Naive thymus-derived CD8-positive, alpha-beta T cell (primary cell): ENCODE measurements at regions of chr2 and their contacts with region 1.

Region 1: GRCh38 chr2:98731041-98731893 is at the start of gene MGAT4A:
- DNase-seq: peak; percentile 72 to 88 (median 82)
- ATAC-seq: peak; percentile 76 to 77
- H3K4me3 Mint-ChIP-seq: peak within 1 kb of the TSS; percentile 73 to 98 (median 92)
- H3K27ac Mint-ChIP-seq: peak within 1 kb of the TSS; percentile 94 to 99 (median 97)
- H3K4me1 Mint-ChIP-seq: peaks cover 22 to 62% (median 58%) of the 10 kb centered on the region in 4 donors
- H3K27me3 Mint-ChIP-seq: no peaks in the 10 kb centered on the region
- polyA plus RNA-seq, gene MGAT4A: 285 to 350 (median 310) TPM

Region 2: DNA sequence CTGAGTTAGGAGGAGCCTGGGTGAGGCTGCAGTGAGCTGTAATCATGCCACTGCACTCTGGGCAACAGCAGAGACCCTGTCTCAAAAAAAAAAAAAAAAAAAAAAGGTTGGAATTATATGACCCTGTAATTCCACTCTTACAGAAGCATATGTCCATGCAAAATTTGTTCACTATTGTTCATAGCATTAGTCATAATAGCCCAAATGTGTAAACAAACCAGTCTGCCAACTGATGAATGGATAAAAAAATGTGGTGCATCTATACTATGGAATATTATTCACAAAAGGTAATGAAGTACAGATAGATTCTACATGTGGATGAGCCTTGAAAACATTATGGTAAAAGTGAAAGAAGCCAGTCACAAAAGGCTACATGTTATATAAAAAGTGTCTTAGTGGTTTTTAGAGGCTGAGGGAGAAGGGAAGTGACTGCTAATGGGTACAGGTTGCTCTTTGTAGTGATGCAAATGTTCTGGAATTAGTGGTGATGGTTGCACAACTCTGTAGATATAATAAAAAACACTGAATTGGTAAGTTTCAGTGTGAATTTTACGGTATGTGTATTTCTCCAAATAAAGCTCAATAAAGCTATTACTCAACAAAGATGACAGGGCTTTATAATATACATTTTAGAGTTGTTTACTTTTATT is 132.4 kb before region 1 on chr2:
- POLR2A ChIA-PET with region 1: no interaction called
- DNase-seq: no peak
- ATAC-seq: peak in 1 of 2 donors; percentile 43
- H3K4me3 Mint-ChIP-seq: no peak overlapping the region
- H3K27ac Mint-ChIP-seq: peak overlapping the region in 9 of 10 donors; percentile 12 to 78 (median 47)
- H3K4me1 Mint-ChIP-seq: peaks cover 6 to 17% (median 12%) of the 10 kb centered on the region in 4 donors
- H3K27me3 Mint-ChIP-seq: no peaks in the 10 kb centered on the region

Region 3: GRCh38 chr2:98664327-98664726 is 66.9 kb before region 1 on chr2:
- POLR2A ChIA-PET with region 1: interaction called, 248 read pairs
- DNase-seq: peak in 9 of 10 donors; percentile 28 to 86 (median 71)
- ATAC-seq: peak; percentile 67 to 72
- H3K4me3 Mint-ChIP-seq: peak overlapping the region; percentile 64 to 93 (median 85)
- H3K27ac Mint-ChIP-seq: peak overlapping the region; percentile 91 to 98 (median 96)
- H3K4me1 Mint-ChIP-seq: peaks cover 38 to 82% (median 70%) of the 10 kb centered on the region in 4 donors
- H3K27me3 Mint-ChIP-seq: no peaks in the 10 kb centered on the region

Region 4: DNA sequence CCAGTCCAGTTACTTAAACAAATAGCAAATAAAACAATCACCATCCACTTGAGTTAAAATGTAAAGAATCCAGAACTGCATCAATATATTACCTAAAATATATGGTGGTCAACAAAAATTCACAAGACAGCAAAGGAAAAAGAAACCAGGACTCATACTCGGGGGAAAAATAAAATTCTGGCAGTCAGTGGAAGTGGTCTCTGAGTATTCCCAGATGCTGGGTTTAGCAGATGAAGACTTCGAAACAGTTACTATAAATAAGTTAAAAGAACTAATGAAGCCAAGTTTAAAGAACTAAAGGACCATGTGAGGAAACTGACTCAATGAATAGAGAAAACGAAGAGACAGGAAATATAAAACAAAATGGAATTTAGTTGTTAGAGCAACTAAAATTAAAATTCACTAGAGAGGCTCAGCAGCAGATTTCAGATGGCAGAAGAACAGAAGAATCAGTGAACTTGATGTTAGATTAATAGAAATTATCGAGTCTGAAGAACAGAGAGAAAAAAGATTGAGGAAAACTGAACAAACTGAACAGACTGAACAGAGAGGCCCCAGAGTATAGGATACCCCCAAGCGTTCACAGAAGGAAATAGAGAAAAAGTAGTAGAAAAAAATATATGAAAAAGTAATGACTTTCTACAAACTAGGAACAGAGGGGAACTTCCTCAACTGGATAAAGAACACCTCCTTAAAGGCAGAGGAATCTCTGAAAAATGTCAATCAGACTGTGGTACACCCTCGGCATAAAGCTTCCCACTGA is 28.2 kb before region 1 on chr2:
- POLR2A ChIA-PET with region 1: interaction called, 12 read pairs
- DNase-seq: no peak
- ATAC-seq: peak; percentile 35 to 62
- H3K4me3 Mint-ChIP-seq: peak overlapping the region; percentile 60 to 87 (median 68)
- H3K27ac Mint-ChIP-seq: peak overlapping the region; percentile 83 to 95 (median 90)
- H3K4me1 Mint-ChIP-seq: peaks cover 45 to 83% (median 80%) of the 10 kb centered on the region in 4 donors
- H3K27me3 Mint-ChIP-seq: no peaks in the 10 kb centered on the region

Region 5: GRCh38 chr2:98715812-98716451 is 15.3 kb before region 1 on chr2:
- POLR2A ChIA-PET with region 1: interaction called, 61 read pairs
- DNase-seq: peak in 2 of 10 donors; percentile 35 to 38
- ATAC-seq: peak; percentile 66 to 74
- H3K4me3 Mint-ChIP-seq: peak overlapping the region; percentile 52 to 80 (median 70)
- H3K27ac Mint-ChIP-seq: peak overlapping the region; percentile 85 to 97 (median 91)
- H3K4me1 Mint-ChIP-seq: peaks cover 47 to 90% (median 88%) of the 10 kb centered on the region in 4 donors
- H3K27me3 Mint-ChIP-seq: no peaks in the 10 kb centered on the region

Region 6: DNA sequence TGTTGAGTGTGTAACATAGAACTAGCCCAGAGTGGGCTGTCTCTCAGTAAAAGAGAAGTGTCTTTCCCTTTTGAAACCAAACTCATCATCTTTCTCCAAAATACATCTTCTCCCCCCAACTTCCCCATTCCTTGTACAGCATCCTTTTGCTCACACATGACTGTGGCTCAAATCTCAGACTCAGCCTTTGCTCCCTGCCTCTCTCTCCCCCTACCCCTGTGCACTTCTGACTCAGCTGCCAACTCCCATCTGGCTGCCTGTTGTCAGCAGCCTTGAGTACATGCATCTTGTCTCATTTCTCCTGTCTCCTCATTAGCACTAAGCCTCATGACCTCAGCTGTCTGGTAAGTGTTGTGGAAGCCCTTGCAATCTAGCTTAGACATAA is 17.8 kb after region 1 on chr2:
- POLR2A ChIA-PET with region 1: interaction called, 24 read pairs
- DNase-seq: no peak
- ATAC-seq: peak in 1 of 2 donors; percentile 25
- H3K4me3 Mint-ChIP-seq: peak overlapping the region in 3 of 10 donors; percentile 1 to 30 (median 2)
- H3K27ac Mint-ChIP-seq: peak overlapping the region in 8 of 10 donors; percentile 9 to 84 (median 63)
- H3K4me1 Mint-ChIP-seq: peaks cover 24 to 55% (median 53%) of the 10 kb centered on the region in 4 donors
- H3K27me3 Mint-ChIP-seq: no peaks in the 10 kb centered on the region

Region 7: DNA sequence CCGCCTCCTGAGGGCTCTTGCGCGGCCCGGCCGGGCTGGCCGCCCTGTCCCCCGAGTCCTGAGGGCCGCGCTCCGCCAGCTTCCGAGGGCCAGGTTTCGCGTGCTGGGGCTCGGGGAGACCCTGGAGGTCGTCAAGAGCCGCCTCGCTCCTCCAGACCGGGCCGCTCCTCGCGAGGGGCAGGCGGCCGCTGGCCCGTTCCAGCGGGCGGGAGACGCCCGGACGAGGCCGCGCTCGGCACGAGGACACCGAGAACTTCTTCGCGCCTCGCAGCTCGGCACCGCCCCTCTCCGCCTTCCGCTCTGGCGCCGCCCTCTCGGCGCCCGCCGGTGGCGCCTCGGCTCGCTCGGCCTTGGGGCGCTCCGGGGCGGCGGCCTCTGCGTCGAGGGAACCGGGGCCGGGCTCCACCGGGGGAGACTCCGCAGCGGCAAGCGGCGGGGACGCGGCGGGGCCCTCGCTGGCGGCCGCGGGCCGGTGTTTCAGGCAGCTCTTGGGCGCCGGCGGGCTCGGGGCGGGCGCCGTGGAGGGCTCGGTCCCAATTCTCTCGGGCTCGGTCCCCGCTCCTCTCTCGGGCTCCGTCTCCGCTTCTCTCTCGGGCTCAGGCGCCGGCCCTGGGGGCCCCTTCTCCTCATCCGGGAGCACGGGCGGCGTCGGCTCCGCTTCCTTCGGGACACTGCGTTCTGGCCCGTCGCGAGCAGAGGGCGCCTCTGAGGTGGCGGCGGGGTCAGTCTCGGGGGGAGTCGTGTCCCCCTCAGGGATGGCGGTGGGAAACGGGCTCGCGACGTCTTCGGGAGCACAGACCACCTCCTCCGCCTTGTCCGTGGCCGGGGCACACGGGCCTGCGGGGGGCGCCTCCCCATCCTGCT is 91.3 kb after region 1 on chr2:
- POLR2A ChIA-PET with region 1: interaction called, 12 read pairs
- DNase-seq: peak; percentile 40 to 75 (median 62)
- ATAC-seq: peak; percentile 90 to 94
- H3K4me3 Mint-ChIP-seq: peak overlapping the region in 9 of 10 donors; percentile 9 to 79 (median 36)
- H3K27ac Mint-ChIP-seq: peak overlapping the region in 3 of 10 donors; percentile 31 to 55 (median 43)
- H3K4me1 Mint-ChIP-seq: peaks cover 12 to 39% (median 24%) of the 10 kb centered on the region in 4 donors
- H3K27me3 Mint-ChIP-seq: peaks cover 0 to 5% (median 0%) of the 10 kb centered on the region in 5 donors

Region 8: DNA sequence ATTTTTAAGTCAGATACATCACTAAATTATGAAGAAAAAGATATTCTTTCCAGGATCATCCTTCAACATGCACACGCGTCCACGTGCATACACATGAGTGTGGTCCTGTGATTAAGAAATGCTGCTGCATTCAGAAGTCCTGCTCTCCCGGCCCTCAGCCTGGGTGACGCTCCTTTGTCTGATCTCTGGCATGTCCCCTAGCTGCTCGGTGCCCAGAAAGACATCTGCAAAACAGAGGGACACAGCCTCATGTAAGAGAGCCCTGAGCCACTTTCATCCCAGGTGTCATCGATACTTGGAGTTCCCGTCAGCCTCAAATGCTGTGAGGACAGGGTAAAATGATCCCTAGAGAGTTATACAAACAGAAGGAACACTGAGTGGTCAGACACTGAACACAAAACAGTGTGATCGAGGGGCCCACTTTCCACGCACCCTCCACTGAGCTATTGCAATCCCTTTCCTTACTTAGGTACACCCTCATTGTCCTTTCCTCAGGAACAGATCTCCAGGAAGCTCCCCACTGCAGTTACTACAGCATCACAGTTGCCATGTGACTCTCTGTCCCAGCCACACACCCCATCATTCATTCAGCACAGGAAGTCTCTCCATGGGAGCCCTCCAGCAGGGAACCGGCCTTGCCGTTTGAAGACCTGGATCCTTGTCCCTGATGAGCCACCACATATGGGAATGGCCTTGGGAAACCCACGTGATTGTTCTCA is 172.7 kb after region 1 on chr2:
- POLR2A ChIA-PET with region 1: no interaction called
- DNase-seq: no peak
- ATAC-seq: no peak
- H3K4me3 Mint-ChIP-seq: no peak overlapping the region
- H3K27ac Mint-ChIP-seq: no peak overlapping the region
- H3K4me1 Mint-ChIP-seq: peaks cover 6 to 12% (median 8%) of the 10 kb centered on the region in 4 donors
- H3K27me3 Mint-ChIP-seq: peaks cover 0 to 9% (median 4%) of the 10 kb centered on the region in 5 donors